GM12878 (cell line): ENCODE measurements at regions of chr1 and their contacts with region 1.

Region 1: DNA sequence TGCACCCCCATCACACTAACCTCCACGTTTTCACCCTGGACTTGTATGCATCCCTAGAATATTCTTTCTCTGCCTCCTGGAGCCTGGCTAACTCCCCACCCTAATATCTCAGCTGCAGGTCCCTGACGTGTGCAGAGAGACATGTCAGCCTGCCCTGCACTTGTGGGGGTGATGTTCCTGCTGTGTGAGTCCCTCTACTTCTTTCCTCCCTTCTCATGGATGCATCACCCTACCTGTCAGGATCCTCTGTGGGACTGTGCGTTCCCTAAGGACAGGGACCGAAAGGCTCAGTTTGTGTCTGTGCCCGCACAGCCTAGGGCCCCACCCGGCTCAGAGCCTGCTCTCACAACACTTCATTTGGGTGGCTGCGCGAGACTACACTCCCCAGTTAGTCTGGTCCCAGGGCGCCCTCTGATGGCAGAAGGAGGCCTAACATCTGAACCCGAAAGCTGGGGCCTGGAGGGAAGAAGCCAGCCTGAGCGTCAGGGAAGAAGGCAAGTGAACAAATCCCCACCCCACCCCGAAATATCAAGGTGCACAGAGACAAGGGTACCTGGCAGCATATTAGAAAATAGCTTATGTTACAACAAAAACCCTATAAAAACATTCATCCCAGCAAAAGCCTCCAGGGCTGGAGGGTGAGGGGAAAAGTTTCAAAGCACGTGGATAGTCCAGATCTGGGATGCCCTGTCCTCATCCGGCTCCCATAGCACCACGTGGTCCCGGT is 3.7 kb downstream of the CD52 start:
- DNase-seq: peak; percentile 57
- ATAC-seq: peak; percentile 76
- H3K4me3 ChIP-seq: no peak overlapping the region
- H3K27ac ChIP-seq: peak overlapping the region; percentile 4; the same call in 1 of the 2 replicates
- H3K4me1 ChIP-seq: peaks cover 26% of the 10 kb centered on the region
- H3K27me3 ChIP-seq: no peaks in the 10 kb centered on the region
- CTCF ChIP-seq: peak; percentile 94 to 98 (median 94)
- EP300 ChIP-seq: no peak
- POLR2A ChIP-seq: no peak
- RAD21 ChIP-seq: peak; percentile 99

Region 2: DNA sequence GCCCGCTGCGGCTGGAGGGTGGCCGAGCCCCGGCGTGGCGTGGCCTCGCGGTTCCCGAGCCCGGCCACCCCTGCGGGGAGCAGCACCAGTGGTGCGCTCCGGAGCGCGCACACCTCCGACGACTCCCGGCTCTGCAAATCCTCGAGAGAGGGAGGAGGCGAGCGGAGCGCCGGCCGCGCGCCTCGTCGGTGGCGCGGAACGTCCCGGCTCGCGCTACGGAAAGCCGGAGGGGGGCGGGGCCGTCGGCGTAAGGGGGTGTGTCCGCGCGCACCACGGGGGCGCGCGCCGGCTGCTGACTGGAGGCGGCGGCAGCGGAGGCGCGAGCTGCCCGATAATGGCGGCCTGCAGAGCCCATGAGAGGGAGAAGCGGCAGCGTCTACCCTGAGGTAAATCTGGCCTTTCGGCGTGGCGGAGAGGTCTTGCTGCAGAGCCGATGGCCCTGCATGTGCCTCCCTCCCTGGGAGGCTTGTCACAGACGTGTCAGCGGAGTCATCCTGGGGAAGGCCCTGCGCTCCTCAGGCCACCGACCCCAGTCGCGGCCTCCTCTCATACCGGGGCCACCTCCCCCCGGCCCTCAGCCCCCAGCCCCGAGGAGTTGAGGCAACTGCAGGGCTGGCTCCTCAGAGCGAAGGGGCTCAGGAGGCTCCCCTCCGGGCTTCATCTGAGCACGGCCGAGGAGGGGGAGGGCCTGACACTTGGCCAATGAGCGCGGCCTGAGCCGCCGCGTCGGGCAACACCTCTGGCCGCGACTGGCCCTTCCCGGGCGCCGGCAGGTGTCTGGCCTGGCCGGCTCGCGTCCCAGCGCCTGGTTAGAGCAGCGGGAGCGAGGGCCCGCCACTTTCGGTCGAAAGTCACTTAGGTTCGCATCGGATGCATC is 209.7 kb before region 1 on chr1 and contains the start of gene PDIK1L:
- CTCF ChIA-PET with region 1: no interaction called
- POLR2A ChIA-PET with region 1: interaction called, 4 read pairs
- RAD21 ChIA-PET with region 1: interaction called, 3 read pairs
- SMC1A ChIA-PET with region 1: no interaction called
- in situ Hi-C with region 1: no loop called
- intact Hi-C with region 1: loop called (anchors 5 kb)
- DNase-seq: peak; percentile 73
- ATAC-seq: peak; percentile 86
- H3K4me3 ChIP-seq: peak within 1 kb of the TSS; percentile 89
- H3K27ac ChIP-seq: peak within 1 kb of the TSS; percentile 85
- H3K4me1 ChIP-seq: peaks cover 12% of the 10 kb centered on the region
- H3K27me3 ChIP-seq: no peaks in the 10 kb centered on the region
- CTCF ChIP-seq: no peak
- EP300 ChIP-seq: 0 out of 4 replicates have a peak, but pooled peaks of 1 of the 2 experiments have one; percentile 5
- POLR2A ChIP-seq: peak; percentile 88
- RAD21 ChIP-seq: no peak
- polyA plus RNA-seq, gene PDIK1L: 4.0 to 9.5 TPM

Region 3: DNA sequence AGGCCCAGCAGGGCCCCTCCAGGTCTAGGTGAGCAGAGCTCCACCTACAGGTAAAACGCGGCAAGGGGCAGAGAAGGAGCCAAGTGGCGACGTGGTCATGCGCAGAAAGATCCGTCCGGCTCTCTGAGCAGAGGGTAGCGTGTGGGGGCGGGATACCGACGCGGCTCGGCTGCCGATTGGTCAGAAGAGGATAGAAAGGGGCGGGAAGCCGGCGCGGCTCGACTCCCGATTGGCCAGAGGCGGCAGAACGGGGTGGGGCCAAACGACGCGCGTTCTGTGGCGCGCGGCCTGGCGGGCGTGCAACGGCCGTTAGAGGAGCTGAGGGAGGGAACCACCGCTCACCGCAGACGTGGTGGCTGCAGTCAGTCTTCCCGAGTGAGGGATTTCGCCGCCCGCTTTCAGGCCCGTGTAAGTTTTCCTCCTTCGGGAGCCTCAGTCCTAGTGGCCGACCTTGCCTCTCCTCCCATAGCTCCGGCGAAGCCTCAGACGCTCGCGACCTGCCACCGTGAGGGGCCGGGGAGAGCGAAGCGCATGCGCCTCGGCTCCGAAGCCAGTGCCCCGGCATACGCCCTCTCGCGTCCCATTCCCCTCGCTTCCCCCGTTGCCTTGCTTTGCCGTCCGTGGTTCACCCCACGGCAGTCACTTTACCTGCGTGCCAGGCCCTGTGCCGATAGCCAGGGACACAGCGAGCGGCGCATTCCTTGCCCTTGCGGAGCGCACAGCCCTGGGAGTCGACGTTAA is 87.4 kb before region 1 on chr1 and contains the start of gene CEP85:
- CTCF ChIA-PET with region 1: interaction called, 21 read pairs
- POLR2A ChIA-PET with region 1: interaction called, 5 read pairs
- RAD21 ChIA-PET with region 1: interaction called, 12 read pairs
- SMC1A ChIA-PET with region 1: interaction called, 6 read pairs
- in situ Hi-C with region 1: no loop called
- intact Hi-C with region 1: loop called (anchors 5 kb)
- DNase-seq: peak; percentile 95
- ATAC-seq: peak; percentile 95
- H3K4me3 ChIP-seq: peak within 1 kb of the TSS; percentile 98
- H3K27ac ChIP-seq: peak within 1 kb of the TSS; percentile 66
- H3K4me1 ChIP-seq: peaks cover 9% of the 10 kb centered on the region
- H3K27me3 ChIP-seq: no peaks in the 10 kb centered on the region
- CTCF ChIP-seq: peak; percentile 88 to 98 (median 91)
- EP300 ChIP-seq: no peak
- POLR2A ChIP-seq: peak; percentile 95
- RAD21 ChIP-seq: peak; percentile 84
- polyA plus RNA-seq, gene CEP85: 8.4 to 8.6 TPM

Region 4: GRCh38 chr1:26284597-26285360 is 36.7 kb before region 1 on chr1:
- CTCF ChIA-PET with region 1: interaction called, 879 read pairs
- POLR2A ChIA-PET with region 1: interaction called, 253 read pairs
- RAD21 ChIA-PET with region 1: interaction called, 477 read pairs
- SMC1A ChIA-PET with region 1: interaction called, 474 read pairs
- in situ Hi-C with region 1: loop called (anchors 5 kb)
- intact Hi-C with region 1: loop called (anchors 1 kb)
- DNase-seq: no peak
- ATAC-seq: peak; percentile 60
- H3K4me3 ChIP-seq: no peak overlapping the region
- H3K27ac ChIP-seq: no peak overlapping the region
- H3K4me1 ChIP-seq: peaks cover 70% of the 10 kb centered on the region
- H3K27me3 ChIP-seq: no peaks in the 10 kb centered on the region
- CTCF ChIP-seq: peak; percentile 86 to 98 (median 90)
- EP300 ChIP-seq: no peak
- POLR2A ChIP-seq: peak; percentile 43
- RAD21 ChIP-seq: peak; percentile 84

Region 5: DNA sequence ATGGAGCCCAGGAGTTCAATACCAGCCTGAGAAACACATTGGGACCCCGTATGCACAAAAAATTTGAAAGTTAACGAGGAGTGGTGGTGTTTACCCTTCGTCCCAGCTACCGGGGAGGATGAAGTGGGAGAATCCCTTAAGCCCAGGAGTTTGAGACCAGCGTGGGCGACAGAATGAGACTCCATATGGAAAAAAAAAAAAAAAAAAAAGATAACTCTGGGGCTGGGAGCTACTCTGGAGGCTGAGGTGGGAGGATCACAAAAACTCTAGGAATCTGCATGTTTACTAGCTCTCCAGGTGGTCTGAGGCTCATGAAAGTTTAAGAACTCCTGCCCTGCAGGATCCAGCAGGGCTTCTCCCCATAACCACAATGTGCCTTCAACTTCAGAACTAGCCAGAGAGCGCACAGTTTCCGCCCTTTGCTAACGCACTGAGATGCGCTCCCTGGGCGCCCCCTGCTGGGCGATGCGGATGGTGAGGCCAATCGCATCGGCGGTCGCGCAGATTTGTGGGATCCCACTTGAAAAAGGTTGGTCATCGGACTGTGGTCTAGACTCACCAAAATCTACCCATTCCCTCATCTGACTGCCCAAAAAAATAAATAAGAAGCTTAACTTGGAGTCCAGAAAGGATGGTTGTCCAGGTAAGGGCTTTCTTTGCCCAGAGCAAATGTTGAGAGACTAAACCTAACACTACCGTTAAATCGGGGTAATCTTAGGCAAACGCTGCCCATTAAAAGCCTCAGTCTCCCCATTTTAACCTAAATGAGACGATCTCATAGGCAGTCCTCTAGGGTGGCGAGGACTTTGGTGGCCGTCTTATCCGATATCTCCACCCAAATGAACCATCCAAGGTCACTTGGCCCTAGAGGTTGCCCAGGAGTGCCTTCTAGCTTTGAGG is 42.3 kb after region 1 on chr1:
- CTCF ChIA-PET with region 1: interaction called, 23 read pairs
- POLR2A ChIA-PET with region 1: no interaction called
- RAD21 ChIA-PET with region 1: interaction called, 3 read pairs
- SMC1A ChIA-PET with region 1: interaction called, 10 read pairs
- in situ Hi-C with region 1: no loop called
- intact Hi-C with region 1: no loop called
- DNase-seq: peak; percentile 16
- ATAC-seq: peak; percentile 91
- H3K4me3 ChIP-seq: no peak overlapping the region
- H3K27ac ChIP-seq: no peak overlapping the region
- H3K4me1 ChIP-seq: no peaks in the 10 kb centered on the region; the same call in 1 of the 2 replicates
- H3K27me3 ChIP-seq: peaks cover 3 to 5% of the 10 kb centered on the region in 2 experiments; a peak in 3 of 4 replicates
- CTCF ChIP-seq: peak; percentile 85 to 98 (median 98)
- EP300 ChIP-seq: no peak
- POLR2A ChIP-seq: no peak
- RAD21 ChIP-seq: peak; percentile 81

Region 6: GRCh38 chr1:26391450-26391849 is 70.0 kb after region 1 on chr1:
- CTCF ChIA-PET with region 1: interaction called, 13 read pairs
- POLR2A ChIA-PET with region 1: no interaction called
- RAD21 ChIA-PET with region 1: interaction called, 10 read pairs
- SMC1A ChIA-PET with region 1: interaction called, 5 read pairs
- in situ Hi-C with region 1: no loop called
- intact Hi-C with region 1: no loop called
- DNase-seq: no peak
- ATAC-seq: peak; percentile 80
- H3K4me3 ChIP-seq: no peak overlapping the region
- H3K27ac ChIP-seq: no peak overlapping the region
- H3K4me1 ChIP-seq: no peaks in the 10 kb centered on the region
- H3K27me3 ChIP-seq: no peaks in the 10 kb centered on the region; a peak in 1 of 4 replicates
- CTCF ChIP-seq: peak; percentile 47 to 62 (median 54)
- EP300 ChIP-seq: no peak
- POLR2A ChIP-seq: no peak
- RAD21 ChIP-seq: peak; percentile 57

Region 7: DNA sequence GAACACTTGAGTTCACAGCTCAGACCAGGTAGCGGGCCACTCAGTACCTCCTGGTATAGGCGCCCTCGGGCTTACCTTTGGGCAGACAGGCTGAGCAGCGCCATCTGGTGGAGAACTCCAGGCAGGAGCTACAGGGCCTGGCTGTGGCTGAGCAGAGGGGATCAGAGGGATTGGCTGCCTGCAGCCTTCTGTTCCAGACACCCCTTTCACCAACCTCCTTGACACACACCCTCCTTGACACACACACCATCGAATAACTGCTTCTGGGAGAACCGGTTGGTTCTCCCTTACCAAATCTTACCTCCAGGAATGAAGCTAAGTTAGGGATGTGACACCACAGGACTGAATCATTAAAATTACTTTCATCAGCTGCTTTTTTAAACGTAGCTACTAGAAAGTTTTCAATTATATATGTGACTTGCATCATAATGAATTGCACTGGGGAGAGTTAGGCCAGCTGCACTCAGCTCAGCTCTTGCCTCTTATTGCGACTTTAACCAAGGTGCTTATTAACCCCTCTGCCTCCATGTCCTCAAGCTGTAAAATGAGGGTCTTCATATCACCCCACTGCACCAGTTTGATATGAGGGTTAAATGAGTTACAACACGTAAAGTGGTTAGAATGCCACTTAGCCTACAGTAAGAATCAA is 95.8 kb after region 1 on chr1:
- CTCF ChIA-PET with region 1: interaction called, 26 read pairs
- POLR2A ChIA-PET with region 1: no interaction called
- RAD21 ChIA-PET with region 1: interaction called, 9 read pairs
- SMC1A ChIA-PET with region 1: interaction called, 11 read pairs
- in situ Hi-C with region 1: no loop called
- intact Hi-C with region 1: no loop called
- DNase-seq: no peak
- ATAC-seq: peak; percentile 100
- H3K4me3 ChIP-seq: no peak overlapping the region
- H3K27ac ChIP-seq: no peak overlapping the region
- H3K4me1 ChIP-seq: no peaks in the 10 kb centered on the region
- H3K27me3 ChIP-seq: peaks cover 0 to 3% of the 10 kb centered on the region in 2 experiments; a peak in 3 of 4 replicates
- CTCF ChIP-seq: peak; percentile 87 to 97 (median 92)
- EP300 ChIP-seq: no peak
- POLR2A ChIP-seq: no peak
- RAD21 ChIP-seq: peak; percentile 71